Heart left ventricle (tissue), 16 donors: ENCODE measurements at regions of chr16 and their contacts with region 1.

Region 1: DNA sequence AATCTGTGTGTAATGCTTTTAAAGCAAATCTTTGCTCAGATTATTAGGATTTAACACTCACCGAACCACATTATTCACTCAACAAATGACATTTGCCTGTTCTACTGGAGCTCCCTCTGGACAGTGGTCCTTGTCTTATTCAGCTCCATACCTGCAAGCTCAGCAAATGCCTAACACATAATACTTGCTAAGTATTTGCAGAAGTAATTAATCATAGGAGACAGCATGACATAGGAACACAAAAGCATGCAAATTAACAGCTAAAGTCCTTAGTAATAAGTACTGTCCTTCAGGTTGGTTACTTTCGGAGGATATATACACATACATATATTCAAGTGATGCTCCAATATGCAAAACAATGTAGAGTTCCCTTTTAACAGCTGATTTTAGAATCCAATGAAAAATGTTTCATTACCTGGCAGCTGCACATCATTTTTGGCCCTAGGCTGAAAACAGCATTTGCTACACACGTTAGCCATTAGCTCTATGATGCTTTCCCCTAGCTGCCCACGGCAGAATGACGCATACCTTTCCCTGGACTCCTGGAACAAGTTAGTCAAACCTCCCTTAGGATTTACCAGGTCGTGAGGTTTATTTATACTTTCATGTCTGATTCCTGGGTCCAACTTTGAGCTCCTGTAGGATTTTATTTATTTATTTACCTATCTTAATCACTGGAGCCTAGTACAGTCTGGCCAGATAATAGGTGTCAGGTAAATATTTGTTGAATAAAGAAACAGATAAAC is 8.6 kb downstream of the BRD7 start:
- DNase-seq: no peak
- ATAC-seq: peak in 1 of 4 donors; percentile 74
- H3K4me3 ChIP-seq: no peak overlapping the region
- H3K27ac ChIP-seq: peak overlapping the region in 1 of 12 donors; percentile 40
- H3K4me1 ChIP-seq: peaks cover 0 to 26% (median 12%) of the 10 kb centered on the region in 12 donors
- H3K27me3 ChIP-seq: no peaks in the 10 kb centered on the region
- CTCF ChIP-seq: no peak
- POLR2A ChIP-seq: no peak

Region 2: DNA sequence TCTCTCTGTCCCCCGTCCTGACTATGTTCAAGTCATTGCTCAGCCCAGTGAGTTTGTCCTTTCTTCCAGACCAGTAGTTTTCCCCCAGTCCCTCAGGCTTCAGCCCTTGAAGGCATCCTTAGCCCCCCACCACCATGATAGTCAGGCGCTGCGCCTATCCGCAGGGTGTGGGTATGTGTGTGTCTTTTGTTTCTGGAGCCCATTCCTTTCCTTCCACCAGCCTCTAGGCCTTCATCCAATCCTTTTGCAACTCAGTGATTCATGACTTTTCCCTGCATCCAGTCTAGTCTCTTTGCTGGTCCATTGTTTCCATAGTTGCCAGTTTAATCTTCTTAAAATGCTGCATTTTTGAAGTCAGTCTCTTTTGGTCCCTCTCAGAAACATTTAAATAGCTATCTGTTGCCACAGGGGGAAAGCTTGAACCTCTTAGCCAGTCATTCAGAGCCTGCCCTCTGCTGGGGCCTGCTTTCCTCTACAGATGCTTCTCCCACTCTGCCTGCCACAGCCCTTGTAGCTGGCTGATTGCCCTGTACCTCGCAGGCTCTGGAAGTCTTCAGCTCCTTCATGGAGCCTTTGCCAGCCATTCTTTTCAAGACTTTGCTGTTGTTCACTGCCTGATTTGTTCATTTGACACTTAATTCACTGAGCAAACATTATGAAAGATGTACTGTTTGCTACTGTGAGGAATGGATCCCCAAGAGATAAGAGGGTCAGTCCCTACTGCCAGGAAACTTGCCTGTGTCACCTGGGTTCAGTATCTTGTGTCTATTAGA is 149.8 kb before region 1 on chr16:
- intact Hi-C with region 1: loop called in 7 of 10 experiments (anchors 5 to 10 kb)
- DNase-seq: peak; percentile 81 to 89 (median 82)
- ATAC-seq: peak; percentile 92 to 95 (median 94)
- H3K4me3 ChIP-seq: no peak overlapping the region
- H3K27ac ChIP-seq: peak overlapping the region in 3 of 12 donors; percentile 17 to 48 (median 40)
- H3K4me1 ChIP-seq: peaks cover 2 to 54% (median 37%) of the 10 kb centered on the region in 12 donors
- H3K27me3 ChIP-seq: no peaks in the 10 kb centered on the region
- CTCF ChIP-seq: peak; percentile 52 to 88 (median 71)
- POLR2A ChIP-seq: no peak